HEK293T (cell line): ENCODE measurements at regions of chr12 and their contacts with region 1.

Region 1: DNA sequence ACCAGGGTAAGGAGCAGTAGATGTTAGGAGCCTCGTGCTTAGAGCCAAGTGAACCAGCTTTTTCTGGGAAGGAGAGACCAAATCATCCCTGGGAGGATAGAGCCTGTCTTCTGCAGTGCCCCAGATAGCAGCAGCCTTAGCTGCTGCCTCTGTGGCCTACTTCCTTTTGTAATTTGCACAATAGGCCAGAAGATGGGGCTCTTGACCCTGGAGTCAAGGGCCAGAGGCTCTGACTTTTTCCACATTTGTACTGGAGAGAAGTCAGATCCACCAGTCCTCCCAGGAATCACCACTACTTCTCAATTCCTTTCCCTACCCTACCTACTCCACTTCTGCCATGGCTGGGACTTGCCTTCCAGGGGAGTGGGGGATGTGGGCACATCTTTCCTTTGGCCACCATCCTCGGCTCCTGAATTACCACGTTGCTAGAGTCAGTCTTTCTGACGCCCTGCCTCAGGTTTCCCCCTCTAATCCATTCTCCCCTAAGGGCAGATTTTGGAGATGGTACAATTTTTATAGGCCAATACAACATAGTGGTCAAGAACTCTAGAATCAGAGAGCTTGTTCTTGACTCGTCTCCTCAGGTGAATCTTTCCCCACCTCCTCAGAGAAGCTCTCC is 3.3 kb upstream of the SLC4A8 start:
- DNase-seq: peak; percentile 72

Region 2: GRCh38 chr12:51531978-51532497 is 110.7 kb after region 1 on chr12:
- CTCF ChIA-PET with region 1: interaction called, 13 read pairs
- POLR2A ChIA-PET with region 1: no interaction called
- DNase-seq: peak; percentile 80

Region 3: DNA sequence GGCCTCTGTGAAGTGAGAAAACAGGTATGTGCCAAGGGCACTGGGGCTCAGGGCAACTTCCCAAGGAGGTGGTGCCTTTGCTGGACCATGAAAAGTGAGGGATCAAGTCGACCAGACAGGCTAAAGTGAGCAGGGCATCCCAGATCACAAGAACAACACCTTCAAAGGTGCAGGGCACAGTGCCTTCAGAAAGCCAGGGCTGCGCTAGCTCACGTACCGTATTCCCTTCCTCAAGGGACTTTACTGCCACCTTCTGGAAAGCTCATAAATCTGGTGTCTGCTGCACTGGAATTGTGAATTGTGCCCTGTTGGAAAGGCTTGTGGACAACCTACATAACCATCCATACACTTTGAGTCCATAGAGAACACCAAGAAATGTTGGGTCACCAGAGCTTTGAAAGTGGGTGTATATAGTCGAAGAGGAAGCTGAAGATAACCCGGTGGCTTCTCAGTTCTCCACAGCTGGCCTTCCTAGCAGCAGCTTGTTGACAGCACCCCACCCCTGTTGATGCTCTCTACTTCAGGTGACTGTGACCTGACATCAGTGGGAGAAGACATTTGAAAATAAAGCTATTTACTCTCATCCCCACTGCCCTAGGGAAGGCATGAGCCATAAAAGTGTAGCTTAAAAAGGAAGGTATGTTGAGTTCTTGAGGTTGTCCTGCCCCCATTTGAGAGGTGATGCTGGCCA is 402.6 kb after region 1 on chr12:
- CTCF ChIA-PET with region 1: interaction called, 11 read pairs
- POLR2A ChIA-PET with region 1: no interaction called
- DNase-seq: peak; percentile 68